GM13977 (cell line): ENCODE measurements at regions of chr3 and their contacts with region 1.

Region 1: DNA sequence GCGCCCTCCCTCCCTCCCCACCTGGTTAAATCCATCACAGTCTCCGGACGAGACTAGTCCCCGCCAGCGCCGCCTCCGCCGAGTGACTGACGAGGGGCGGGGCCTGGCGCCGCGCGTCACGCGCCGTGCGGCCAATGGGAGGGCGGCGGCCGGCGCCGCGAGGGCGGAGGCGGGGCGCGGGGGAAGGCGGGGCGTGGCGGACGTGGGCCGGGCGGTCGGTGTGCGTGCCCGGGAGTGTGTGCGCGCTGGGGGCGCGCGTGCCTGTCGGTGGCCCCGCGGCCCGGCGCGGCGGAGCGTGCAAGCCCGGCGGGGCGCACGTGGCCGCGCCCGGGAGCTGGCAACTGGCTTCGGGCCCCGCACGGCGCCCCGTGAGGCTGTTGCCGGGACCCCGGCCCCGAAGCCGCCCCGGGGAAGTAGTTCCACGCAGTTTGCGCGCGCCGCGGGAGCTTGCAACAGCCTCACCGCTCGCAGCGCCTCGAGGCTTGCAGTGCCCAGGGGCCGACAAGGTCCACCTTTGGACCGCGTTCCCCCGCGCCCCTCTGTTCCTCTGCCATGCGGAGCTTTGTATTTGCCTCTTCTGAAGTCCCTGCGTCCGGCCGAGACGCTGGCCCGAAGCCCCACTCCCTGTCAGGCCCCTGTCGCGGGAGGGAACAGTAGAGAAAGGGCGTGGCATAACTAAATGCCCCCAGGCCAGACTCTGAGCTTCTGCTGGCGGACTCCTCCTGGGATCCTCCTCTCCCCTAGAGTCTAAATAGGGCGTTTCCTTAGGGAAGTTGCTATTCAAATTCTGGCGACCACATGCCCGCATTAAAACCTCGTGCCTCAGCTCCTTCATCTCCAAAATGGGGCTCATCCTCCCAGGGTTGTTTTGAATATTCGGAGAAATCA is 400.9 kb downstream of the SHQ1 start:
- DNase-seq: peak; percentile 98
- CTCF ChIP-seq: no peak

Region 2: GRCh38 chr3:72041511-72041910 is 405.8 kb before region 1 on chr3:
- in situ Hi-C with region 1: no loop called
- DNase-seq: no peak
- CTCF ChIP-seq: no peak

Region 3: DNA sequence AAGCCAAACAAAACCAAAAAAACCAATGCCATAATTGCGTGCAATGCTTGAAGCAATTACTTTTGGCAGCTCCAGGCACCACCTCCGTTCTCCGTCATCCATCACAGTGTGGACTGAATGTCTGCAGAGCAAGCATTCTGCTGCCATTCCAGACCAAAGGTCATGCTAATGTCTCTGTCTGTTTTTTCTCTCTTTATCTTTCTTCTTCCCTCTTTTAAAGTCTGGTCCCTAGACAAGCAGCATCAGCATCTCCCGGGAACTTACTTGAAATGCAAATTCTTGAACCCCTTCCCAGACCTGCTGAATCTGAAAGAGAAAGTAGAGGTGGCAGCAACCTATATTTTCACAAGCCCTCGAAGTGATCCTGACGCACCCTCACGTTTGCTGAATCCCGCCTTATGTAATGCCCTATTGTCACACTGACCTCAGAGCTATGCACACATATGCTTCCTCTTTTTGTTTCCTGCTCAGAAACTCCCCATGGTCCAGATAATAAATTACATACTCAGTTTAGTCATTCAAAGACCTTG is 365.1 kb before region 1 on chr3:
- in situ Hi-C with region 1: loop called (anchors 25 kb)
- DNase-seq: peak; percentile 77
- CTCF ChIP-seq: no peak

Region 4: GRCh38 chr3:72177083-72178050 is 269.9 kb before region 1 on chr3:
- in situ Hi-C with region 1: loop called (anchors 10 kb)
- DNase-seq: peak; percentile 42
- CTCF ChIP-seq: no peak